ENCODE measurements at regions of chr12 and their contacts with region 1.

Region 1: DNA sequence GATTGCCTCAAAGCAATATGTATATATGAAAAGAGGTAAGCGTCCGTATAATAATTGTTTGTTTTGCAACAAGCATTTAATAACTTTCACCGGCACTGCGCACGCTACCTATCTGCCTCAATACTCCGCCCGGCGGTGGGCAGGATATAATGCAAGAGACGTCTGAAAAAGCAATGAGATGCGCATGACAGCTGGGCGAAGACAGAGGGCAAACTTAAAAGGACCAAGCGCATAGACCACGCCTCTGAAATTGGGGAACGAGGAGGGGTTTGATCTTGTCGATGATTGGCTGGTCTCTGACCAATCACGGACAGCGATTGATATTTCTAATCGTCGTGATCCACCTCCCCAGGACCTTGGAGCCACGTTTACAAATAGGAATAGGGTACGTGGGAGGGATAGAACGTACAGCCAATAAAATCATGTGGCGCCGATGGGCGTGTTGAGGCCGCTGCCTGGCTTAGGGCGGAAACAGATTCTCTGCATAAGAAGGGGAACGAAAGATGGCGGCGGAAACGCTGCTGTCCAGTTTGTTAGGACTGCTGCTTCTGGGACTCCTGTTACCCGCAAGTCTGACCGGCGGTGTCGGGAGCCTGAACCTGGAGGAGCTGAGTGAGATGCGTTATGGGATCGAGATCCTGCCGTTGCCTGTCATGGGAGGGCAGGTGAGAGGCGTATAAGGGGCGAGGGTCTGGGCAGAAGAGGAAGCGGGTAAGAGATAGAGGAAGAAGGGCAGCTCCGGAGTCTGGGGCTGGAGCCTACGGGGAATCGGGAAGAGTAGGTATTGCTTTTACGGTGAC is at the start of gene OS9:
- DNase-seq: peak; percentile 100
- H3K4me3 ChIP-seq: peak within 1 kb of the TSS; percentile 81
- H3K27ac ChIP-seq: no peak within 1 kb of the TSS
- H3K4me1 ChIP-seq: peaks cover 12% of the 10 kb centered on the region
- CTCF ChIP-seq: peak; percentile 86
- total RNA-seq, gene OS9: 82.6 and 104 TPM in 2 replicates

Region 2: DNA sequence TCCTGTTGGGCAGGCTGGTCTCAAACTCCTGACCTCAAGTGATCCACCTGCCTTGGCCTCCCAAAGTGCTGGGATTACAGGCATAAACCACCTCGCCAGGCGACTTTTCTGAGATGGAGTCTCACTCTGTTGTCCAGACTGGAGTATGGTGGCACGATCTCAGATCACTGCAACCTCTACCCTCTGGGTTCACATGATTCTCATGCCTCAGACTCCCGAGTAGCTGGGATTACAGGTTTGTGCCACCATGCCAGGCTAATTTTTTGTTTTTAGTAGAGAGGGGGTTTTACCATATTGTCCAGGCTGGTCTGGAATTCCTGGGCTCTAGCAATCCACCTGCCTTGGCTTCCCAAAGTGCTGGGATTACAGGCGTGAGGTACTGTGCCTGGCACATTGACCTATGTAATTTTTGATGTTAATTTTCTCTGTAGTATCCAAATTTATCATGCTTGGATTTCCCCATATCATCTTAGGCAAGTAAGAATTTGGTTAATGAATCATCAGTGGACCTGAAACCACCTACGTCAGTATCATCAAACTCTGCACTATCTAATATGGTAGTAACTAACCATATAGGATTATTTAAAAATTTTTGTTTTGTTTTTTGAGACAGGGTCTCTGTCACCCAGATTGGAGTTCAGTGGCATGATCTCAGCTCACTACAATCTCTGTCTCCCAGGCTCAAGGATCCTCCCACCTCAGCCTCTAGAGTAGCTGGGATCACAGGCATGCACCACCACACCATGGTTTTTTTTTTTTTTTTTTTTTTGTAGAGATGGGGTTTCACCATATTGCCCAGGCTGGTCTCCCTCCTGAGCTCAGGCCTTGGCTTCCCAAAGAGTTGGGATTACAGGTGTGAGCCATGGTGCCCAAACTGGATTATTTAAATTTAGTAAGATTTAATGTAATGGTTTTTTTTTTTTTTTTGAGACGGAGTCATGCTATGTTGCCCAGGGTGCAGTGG is 1036.2 kb before region 1 on chr12:
- CTCF ChIA-PET with region 1: no interaction called
- POLR2A ChIA-PET with region 1: no interaction called
- intact Hi-C with region 1: no loop called
- DNase-seq: no peak
- H3K4me3 ChIP-seq: no peak overlapping the region
- H3K27ac ChIP-seq: no peak overlapping the region
- H3K4me1 ChIP-seq: no peaks in the 10 kb centered on the region
- CTCF ChIP-seq: no peak

Region 3: DNA sequence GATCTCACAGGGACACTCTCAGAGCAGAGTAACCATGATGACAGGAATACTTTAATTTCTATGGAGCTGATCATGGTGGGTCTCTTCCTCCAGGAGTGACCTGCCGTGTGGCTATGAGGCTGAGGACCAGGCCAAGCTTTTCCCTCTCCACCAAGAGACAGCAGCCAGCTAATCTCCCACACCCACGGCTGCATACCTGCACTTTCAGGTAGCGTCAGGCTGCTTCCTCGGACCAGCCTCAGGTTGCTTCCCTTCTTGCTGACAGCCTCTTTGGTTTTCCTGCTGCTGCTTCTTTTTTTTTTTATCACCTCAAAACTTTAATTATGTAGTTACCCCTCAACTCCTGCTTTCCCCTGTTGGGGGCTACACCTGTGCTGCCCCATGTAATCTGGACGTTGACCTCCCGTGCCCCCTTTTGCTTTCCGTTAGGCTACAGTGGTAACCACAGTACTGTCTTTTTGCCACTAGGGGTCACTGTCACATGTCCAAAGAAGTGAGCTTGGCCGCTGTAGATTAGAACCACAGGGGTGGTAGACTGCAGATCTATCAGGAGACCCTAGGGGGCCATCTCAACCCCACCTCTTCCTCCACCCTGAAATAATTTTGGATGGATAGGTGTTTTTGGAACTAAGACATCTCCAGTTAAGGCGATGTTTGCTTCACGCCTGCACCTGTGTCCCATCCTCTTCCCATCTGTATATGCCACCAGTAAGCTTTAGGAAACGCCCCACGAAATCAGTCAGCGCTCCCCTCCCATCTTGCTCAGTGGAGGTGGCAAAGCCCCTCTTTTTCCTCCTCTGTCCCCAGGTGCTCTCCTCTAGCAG is 110.6 kb before region 1 on chr12:
- CTCF ChIA-PET with region 1: interaction called, 3 read pairs
- POLR2A ChIA-PET with region 1: no interaction called
- intact Hi-C with region 1: loop called (anchors 1 kb)
- DNase-seq: peak; percentile 94
- H3K4me3 ChIP-seq: no peak overlapping the region
- H3K27ac ChIP-seq: no peak overlapping the region
- H3K4me1 ChIP-seq: no peaks in the 10 kb centered on the region
- CTCF ChIP-seq: peak; percentile 100

Region 4: DNA sequence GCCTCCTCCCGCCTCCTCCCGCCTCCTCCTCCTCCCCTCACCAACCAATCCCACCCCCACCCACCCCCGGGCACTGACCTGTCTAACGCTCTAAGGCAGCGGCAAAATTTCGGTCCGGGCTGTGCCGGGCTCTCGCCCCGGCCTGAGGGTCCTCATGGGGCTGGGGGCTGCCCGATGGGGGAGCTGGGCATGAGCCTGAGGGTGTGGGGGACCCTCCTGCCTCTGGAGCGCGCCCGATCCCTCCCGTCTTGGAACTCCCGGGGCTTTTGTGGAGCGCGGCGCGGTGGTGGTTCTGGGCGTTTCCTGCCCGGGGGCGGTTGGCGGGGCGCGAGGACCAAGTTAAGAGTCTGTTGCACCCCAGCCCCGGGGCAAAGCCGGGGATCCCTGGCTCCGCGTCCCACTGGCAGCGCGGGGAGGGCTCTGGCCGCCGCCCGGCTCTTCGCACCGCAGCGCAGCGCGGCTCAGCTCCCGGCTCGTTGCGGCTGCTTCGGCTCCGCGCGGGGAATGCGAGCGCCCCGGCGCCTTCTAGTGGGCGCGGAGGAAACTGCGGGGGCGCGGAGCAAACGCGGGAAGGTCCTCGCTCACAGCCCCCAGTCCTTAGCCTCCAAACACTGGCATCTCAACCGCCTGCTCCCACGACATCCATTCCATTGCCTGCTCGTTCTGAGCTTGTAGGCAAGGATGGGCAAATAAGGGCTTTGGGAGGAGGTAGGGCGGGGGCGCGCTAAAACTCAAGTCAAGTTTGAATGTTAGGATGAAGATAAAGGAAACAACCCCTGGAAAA is 61.0 kb before region 1 on chr12 and contains the start of gene B4GALNT1:
- CTCF ChIA-PET with region 1: no interaction called
- POLR2A ChIA-PET with region 1: no interaction called
- intact Hi-C with region 1: loop called (anchors 5 kb)
- DNase-seq: peak; percentile 78
- H3K4me3 ChIP-seq: peak within 1 kb of the TSS; percentile 58
- H3K27ac ChIP-seq: no peak within 1 kb of the TSS
- H3K4me1 ChIP-seq: no peaks in the 10 kb centered on the region
- CTCF ChIP-seq: peak; percentile 87
- total RNA-seq, gene B4GALNT1: 1.1 and 1.2 TPM in 2 replicates

Region 5: GRCh38 chr12:57672801-57673200 is 21.1 kb before region 1 on chr12:
- CTCF ChIA-PET with region 1: no interaction called
- POLR2A ChIA-PET with region 1: no interaction called
- intact Hi-C with region 1: no loop called
- DNase-seq: no peak
- H3K4me3 ChIP-seq: no peak overlapping the region
- H3K27ac ChIP-seq: no peak overlapping the region
- H3K4me1 ChIP-seq: no peaks in the 10 kb centered on the region
- CTCF ChIP-seq: no peak

Region 6: DNA sequence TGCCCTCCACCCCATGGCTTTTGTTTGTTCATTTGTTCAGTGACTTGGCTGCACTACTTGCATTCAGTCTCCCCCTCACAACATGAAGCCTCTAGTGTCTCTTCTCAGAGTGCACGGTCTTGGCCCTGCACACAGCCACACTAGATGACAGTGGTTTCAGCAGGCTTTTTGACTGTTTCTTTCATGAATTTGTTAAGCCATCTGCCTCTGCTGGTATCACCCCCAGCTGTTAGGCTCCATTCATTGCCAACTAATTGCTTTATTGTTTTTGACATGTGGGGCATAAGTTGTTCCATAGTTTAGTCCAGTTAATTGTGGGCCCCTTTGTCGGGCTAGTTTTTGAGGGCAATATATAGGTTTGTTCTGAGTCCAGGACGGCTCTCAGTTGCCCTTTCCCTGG is 18.8 kb after region 1 on chr12:
- CTCF ChIA-PET with region 1: no interaction called
- POLR2A ChIA-PET with region 1: interaction called, 6 read pairs
- intact Hi-C with region 1: loop called (anchors 2 kb)
- DNase-seq: no peak
- H3K4me3 ChIP-seq: no peak overlapping the region
- H3K27ac ChIP-seq: no peak overlapping the region
- H3K4me1 ChIP-seq: peaks cover 29% of the 10 kb centered on the region
- CTCF ChIP-seq: no peak

Region 7: GRCh38 chr12:57744777-57745484 is 51.1 kb after region 1 on chr12 and contains the start of gene TSPAN31:
- CTCF ChIA-PET with region 1: no interaction called
- POLR2A ChIA-PET with region 1: no interaction called
- intact Hi-C with region 1: loop called (anchors 1 kb)
- DNase-seq: peak; percentile 79
- H3K4me3 ChIP-seq: peak within 1 kb of the TSS; percentile 44
- H3K27ac ChIP-seq: no peak within 1 kb of the TSS
- H3K4me1 ChIP-seq: peaks cover 40% of the 10 kb centered on the region
- CTCF ChIP-seq: no peak
- total RNA-seq, gene TSPAN31: 0.80 and 2.4 TPM in 2 replicates

Measured in OCI-LY7 (cell line).